ENCODE measurements at regions of chr1 and their contacts with region 1.

Region 1: DNA sequence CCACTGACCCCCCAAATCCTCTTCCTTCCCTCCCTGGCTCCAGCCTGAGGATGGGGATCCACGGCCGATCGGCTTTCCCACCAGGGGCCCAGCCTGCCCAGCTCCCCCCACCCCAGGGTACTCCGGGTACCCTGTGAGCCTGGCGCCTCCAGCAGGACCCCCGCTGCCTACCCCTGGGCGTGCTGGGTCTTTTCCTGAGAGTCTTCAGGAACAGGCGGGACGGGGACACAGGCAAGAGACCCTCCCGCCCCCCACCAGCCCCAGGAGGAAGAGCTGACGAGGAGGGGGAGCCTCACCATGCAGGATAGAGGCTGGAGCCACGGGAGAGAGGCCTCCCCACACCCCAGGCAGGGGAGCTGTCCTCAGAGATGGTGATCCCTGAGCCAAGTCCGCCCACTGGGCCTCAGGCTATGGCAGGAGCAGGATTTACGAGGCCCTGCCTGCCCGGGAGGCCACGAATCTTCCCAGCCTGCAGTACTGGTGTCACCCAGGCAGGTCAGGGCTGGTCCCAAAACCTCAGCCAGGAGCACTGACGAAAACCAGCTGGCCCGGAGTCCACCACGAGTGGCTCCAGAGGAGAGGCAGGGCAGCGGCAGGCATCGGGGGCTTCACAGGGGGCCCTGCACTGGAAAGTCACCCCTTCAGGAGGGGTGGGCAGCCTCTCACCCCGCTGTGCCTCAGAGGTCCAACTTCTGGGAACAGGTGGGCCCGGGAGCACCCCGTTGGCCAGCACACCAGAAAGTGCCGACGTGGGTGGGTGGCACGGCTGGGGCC is 58.0 kb downstream of the MEGF6 start:
- DNase-seq: peak; percentile 31
- ATAC-seq: peak; percentile 76
- H3K4me3 ChIP-seq: no peak overlapping the region
- H3K27ac ChIP-seq: no peak overlapping the region
- H3K4me1 ChIP-seq: peaks cover 10% of the 10 kb centered on the region
- H3K27me3 ChIP-seq: peaks cover 11% of the 10 kb centered on the region; the same call in 1 of the 2 replicates
- CTCF ChIP-seq: no peak
- POLR2A ChIP-seq: no peak
- RAD21 ChIP-seq: no peak

Region 2: DNA sequence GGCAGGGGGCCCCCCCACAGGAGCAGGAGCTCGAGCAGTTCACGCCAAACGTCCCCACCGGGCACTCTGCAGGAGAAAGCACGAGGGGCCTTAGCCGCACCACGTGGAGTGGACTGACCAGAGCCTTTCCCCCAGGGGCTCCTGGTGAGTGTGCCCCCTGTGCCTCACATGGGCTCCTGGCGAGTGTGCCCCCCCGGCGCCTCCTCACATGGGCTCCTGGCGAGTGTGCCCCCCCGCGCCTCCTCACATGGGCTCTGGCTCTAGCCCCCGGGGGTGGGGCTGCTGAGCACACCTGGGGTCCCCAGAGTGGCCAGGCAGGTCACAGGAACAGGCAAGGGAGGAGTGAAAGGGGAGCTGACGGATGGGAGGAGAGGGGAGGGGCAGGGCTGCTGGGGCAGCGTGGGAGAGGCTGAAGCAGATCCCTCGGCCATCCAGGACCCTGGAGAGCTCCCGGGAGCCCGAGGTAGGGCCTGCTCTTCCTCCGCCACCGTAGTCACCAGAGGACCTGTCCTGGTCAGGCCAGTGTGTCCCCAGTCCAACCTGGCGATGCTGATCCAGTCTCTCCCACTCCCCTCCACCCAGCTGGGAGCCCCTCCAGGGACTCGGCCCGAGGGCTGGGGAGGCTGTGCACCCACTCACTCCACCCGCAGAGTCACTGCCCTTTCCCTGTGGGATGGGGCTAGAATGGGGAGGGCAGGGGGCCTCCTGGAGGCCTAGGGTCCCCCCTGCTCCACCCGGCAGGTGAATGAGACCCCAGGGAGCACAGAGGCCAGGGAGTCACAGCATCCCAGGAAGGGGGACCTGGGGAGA is 51.3 kb before region 1 on chr1:
- CTCF ChIA-PET with region 1: no interaction called
- POLR2A ChIA-PET with region 1: no interaction called
- dilution Hi-C with region 1: no loop called
- in situ Hi-C with region 1: loop called (anchors 5 kb)
- intact Hi-C with region 1: no loop called
- DNase-seq: peak; percentile 38
- ATAC-seq: peak; percentile 72
- H3K4me3 ChIP-seq: no peak overlapping the region
- H3K27ac ChIP-seq: no peak overlapping the region
- H3K4me1 ChIP-seq: peaks cover 7% of the 10 kb centered on the region; the same call in 1 of the 2 replicates
- H3K27me3 ChIP-seq: no peaks in the 10 kb centered on the region
- CTCF ChIP-seq: no peak
- POLR2A ChIP-seq: no peak
- RAD21 ChIP-seq: no peak

Region 3: GRCh38 chr1:3573500-3573899 is 20.1 kb after region 1 on chr1:
- CTCF ChIA-PET with region 1: no interaction called
- POLR2A ChIA-PET with region 1: interaction called, 16 read pairs
- dilution Hi-C with region 1: no loop called
- in situ Hi-C with region 1: no loop called
- intact Hi-C with region 1: no loop called
- DNase-seq: no peak
- ATAC-seq: no peak
- H3K4me3 ChIP-seq: no peak overlapping the region
- H3K27ac ChIP-seq: no peak overlapping the region
- H3K4me1 ChIP-seq: peaks cover 2% of the 10 kb centered on the region; the same call in 1 of the 2 replicates
- H3K27me3 ChIP-seq: peaks cover 5% of the 10 kb centered on the region; the same call in 1 of the 2 replicates
- CTCF ChIP-seq: no peak
- POLR2A ChIP-seq: no peak
- RAD21 ChIP-seq: no peak

Region 4: GRCh38 chr1:3624200-3625136 is 71.1 kb after region 1 on chr1 and contains the start of gene TPRG1L:
- CTCF ChIA-PET with region 1: interaction called, 4 read pairs
- POLR2A ChIA-PET with region 1: no interaction called
- dilution Hi-C with region 1: no loop called
- in situ Hi-C with region 1: loop called (anchors 5 kb)
- intact Hi-C with region 1: no loop called
- DNase-seq: peak; percentile 90
- ATAC-seq: peak; percentile 98
- H3K4me3 ChIP-seq: peak within 1 kb of the TSS; percentile 99
- H3K27ac ChIP-seq: peak within 1 kb of the TSS; percentile 84
- H3K4me1 ChIP-seq: peaks cover 7% of the 10 kb centered on the region
- H3K27me3 ChIP-seq: no peaks in the 10 kb centered on the region
- CTCF ChIP-seq: no peak
- POLR2A ChIP-seq: no peak
- RAD21 ChIP-seq: no peak
- total RNA-seq, gene TPRG1L: 25.3 and 25.6 TPM in 2 replicates